Caki2 (cell line): ENCODE measurements at regions of chr21 and their contacts with region 1.

Region 1: DNA sequence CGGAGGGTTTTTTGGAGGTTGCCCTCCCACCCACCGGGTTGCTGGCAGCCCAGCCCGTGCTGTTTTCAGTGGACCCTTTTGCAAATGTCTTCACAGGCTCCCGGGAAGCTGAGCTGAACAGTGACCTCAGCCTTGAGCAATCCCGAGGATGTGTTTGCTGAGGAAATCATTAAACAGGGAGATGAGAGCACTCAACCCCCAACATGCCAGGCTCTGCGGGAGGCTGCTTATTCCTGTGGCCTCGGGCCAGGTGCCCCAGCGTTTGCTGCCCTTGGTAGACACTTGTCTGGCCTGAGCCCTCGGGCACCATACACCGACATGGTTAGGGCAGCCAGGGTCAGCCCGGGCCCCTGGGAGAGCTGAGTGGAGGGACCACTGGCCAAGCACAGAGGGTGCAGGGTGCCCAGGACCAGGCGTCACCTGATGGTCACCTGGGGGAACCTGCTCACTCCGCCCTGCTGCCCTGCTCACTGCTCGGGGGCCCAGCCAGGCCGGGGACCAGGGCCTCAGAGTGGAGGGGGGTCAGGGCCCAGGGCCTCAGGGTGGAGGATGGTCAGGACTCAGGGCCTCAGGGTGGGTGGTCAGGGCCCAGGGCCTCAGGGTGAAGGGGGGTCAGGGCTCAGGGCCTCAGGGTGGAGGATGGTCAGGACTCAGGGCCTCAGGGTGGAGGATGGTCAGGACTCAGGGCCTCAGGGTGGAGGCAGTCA is 42.5 kb upstream of the POFUT2 start:
- DNase-seq: peak; percentile 96

Region 2: DNA sequence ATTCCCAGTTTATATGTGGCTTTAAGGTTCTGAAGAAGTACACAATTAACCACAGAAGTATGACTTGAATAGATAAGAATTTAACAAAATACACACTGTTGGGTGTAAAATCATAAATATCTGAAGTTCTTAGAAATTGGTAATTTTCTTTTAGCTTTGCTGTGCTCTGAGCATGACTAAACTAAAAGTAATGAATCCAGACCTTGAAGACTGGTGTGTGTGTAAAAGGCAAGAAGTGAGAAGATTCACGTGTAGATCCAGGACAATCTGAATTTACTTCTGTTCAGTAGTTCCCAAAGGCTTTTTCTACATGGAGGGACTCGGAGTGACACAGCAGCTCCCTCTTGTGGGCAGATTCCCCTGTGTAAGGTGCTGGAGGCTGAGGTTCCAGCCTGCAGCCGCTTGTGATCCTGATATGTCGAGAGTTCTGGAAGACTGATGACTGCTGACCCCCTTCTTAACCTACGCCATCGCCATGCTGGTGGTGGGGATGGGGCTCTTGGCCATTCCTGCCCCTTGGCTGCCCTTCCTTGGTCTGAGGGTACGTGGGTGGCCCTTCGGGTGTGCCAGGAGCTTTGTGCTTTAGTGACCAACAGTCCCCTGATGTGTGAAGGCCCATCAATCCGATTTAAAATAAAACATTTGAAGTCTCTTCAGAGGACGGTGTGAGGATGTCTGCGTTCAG is 193.2 kb before region 1 on chr21:
- in situ Hi-C with region 1: no loop called
- DNase-seq: peak; percentile 63

Region 3: DNA sequence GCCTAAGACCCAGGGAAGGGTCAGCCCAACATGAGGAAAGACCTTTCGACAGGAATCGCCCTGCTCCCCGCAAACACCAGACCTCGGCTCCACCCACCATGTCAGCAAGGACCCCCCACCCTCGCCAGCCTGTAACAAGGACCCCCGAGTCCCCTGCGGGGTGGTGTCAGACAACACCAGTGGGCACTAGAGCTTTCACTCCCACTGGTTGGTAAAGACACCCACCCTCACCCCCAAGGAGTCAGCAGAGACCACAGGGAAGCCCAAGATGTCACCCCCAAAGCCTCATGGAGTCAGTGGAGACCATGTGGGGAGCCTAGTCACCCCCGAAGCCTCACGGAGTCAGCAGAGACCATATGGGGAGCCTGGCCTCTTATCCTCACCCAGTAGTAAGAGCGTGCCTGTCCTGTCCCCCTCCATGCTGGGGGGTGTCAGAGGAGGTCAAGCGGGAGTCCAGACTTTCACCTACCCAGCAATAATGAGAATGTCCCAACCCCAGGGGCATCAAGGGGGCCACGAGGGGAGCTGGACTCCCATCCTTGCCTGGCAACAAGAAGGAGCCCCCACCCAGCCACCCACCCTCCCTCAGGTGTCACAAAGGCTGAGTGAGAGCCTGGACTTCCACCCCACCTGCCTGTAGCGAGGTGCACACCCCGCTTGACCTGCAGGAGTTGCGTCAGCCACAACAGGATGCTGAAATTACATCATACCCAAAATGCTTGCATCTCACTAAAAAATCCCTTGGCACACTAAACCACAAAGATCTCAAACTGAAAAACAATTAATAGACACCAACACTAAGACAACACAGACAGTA is 187.2 kb after region 1 on chr21:
- in situ Hi-C with region 1: loop called (anchors 25 kb)
- DNase-seq: no peak